Activated CD4-positive, alpha-beta T cell treated with anti-CD3 and anti-CD28 coated beads, Interleukin-2, amount 10 ng/mL, durations not matched to agents 24 days and 14 days (primary cell): ENCODE measurements at regions of chr14 and their contacts with region 1.

Region 1: GRCh38 chr14:94036313-94037050 is 10.3 kb downstream of the OTUB2 start:
- DNase-seq: peak; percentile 94
- H3K4me3 Mint-ChIP-seq: no peak overlapping the region
- H3K27ac Mint-ChIP-seq: peak overlapping the region; percentile 45
- H3K4me1 Mint-ChIP-seq: peaks cover 4% of the 10 kb centered on the region
- H3K27me3 Mint-ChIP-seq: no peaks in the 10 kb centered on the region

Region 2: GRCh38 chr14:93906341-93907329 is 129.8 kb before region 1 on chr14:
- intact Hi-C with region 1: no loop called
- DNase-seq: peak; percentile 89
- H3K4me3 Mint-ChIP-seq: no peak overlapping the region
- H3K27ac Mint-ChIP-seq: peak overlapping the region; percentile 54
- H3K4me1 Mint-ChIP-seq: no peaks in the 10 kb centered on the region
- H3K27me3 Mint-ChIP-seq: peaks cover 15% of the 10 kb centered on the region

Region 3: DNA sequence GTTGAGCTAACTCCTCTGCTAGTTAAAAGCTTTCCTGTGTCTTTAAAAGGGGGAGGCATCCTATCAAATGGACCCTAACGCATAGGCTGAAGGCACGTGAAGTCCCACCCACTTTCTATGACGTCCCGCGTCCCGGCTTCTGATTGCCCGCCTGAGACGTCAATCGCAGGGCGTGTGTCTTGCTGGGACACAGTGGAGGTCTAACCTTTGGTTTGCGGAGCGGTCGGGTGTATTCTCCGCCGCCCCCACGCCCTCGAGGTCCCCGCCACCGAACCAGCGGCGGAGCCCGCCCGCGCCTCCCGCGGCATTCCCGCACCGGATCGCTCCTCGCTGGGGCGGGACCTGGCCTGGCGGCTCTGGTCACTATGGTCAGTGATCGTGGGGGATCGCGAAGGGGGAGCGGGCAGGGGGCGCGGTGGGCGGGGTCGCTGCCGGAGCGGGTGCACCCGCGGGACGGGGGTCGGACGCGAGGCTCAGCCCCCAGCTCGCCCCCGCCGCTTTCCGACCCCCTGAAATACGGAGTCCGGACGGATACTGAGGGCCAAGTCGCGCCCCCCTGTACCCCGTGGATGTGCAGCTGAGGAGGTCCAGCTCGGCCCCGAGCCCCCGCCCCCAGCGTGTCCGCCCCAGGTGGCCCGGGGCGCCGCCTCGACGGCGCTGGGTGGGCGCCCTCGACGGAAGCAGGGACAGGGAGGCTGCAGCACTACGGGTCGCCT is 10.2 kb before region 1 on chr14 and contains the start of gene OTUB2:
- intact Hi-C with region 1: loop called (anchors 1 kb)
- DNase-seq: peak; percentile 99
- H3K4me3 Mint-ChIP-seq: peak within 1 kb of the TSS; percentile 75
- H3K27ac Mint-ChIP-seq: peak within 1 kb of the TSS; percentile 52
- H3K4me1 Mint-ChIP-seq: peaks cover 41% of the 10 kb centered on the region
- H3K27me3 Mint-ChIP-seq: no peaks in the 10 kb centered on the region
- total RNA-seq, gene OTUB2: 1.3 and 1.7 TPM in 2 replicates

Region 4: GRCh38 chr14:94056579-94057308 is 20.3 kb after region 1 on chr14:
- intact Hi-C with region 1: loop called (anchors 2 kb)
- DNase-seq: peak; percentile 86
- H3K4me3 Mint-ChIP-seq: peak overlapping the region; percentile 45
- H3K27ac Mint-ChIP-seq: peak overlapping the region; percentile 73
- H3K4me1 Mint-ChIP-seq: peaks cover 53% of the 10 kb centered on the region
- H3K27me3 Mint-ChIP-seq: no peaks in the 10 kb centered on the region

Region 5: GRCh38 chr14:94136575-94137331 is 100.3 kb after region 1 on chr14:
- intact Hi-C with region 1: loop called (anchors 1 kb)
- DNase-seq: peak; percentile 96
- H3K4me3 Mint-ChIP-seq: no peak overlapping the region
- H3K27ac Mint-ChIP-seq: no peak overlapping the region
- H3K4me1 Mint-ChIP-seq: peaks cover 7% of the 10 kb centered on the region
- H3K27me3 Mint-ChIP-seq: peaks cover 38% of the 10 kb centered on the region

Region 6: GRCh38 chr14:94180655-94181271 is 144.3 kb after region 1 on chr14:
- intact Hi-C with region 1: loop called (anchors 1 kb)
- DNase-seq: peak; percentile 76
- H3K4me3 Mint-ChIP-seq: peak overlapping the region; percentile 58
- H3K27ac Mint-ChIP-seq: peak overlapping the region; percentile 22
- H3K4me1 Mint-ChIP-seq: peaks cover 11% of the 10 kb centered on the region
- H3K27me3 Mint-ChIP-seq: peaks cover 25% of the 10 kb centered on the region

Region 7: GRCh38 chr14:94307410-94307992 is 271.0 kb after region 1 on chr14:
- intact Hi-C with region 1: loop called (anchors 10 kb)
- DNase-seq: no peak
- H3K4me3 Mint-ChIP-seq: no peak overlapping the region
- H3K27ac Mint-ChIP-seq: no peak overlapping the region
- H3K4me1 Mint-ChIP-seq: no peaks in the 10 kb centered on the region
- H3K27me3 Mint-ChIP-seq: no peaks in the 10 kb centered on the region